GM12878 (cell line): ENCODE measurements at regions of chr3 and their contacts with region 1.

Region 1: GRCh38 chr3:99607151-99607550 is 31.2 kb upstream of the COL8A1 start:
- DNase-seq: no peak
- ATAC-seq: peak; percentile 40; the same call in 2 of the 3 replicates
- H3K4me3 ChIP-seq: no peak overlapping the region
- H3K27ac ChIP-seq: no peak overlapping the region
- H3K4me1 ChIP-seq: no peaks in the 10 kb centered on the region
- H3K27me3 ChIP-seq: no peaks in the 10 kb centered on the region
- CTCF ChIP-seq: no peak
- EP300 ChIP-seq: no peak
- POLR2A ChIP-seq: no peak
- RAD21 ChIP-seq: no peak

Region 2: GRCh38 chr3:99551520-99551919 is 55.6 kb before region 1 on chr3:
- CTCF ChIA-PET with region 1: no interaction called
- POLR2A ChIA-PET with region 1: no interaction called
- RAD21 ChIA-PET with region 1: no interaction called
- SMC1A ChIA-PET with region 1: no interaction called
- in situ Hi-C with region 1: no loop called
- intact Hi-C with region 1: loop called (anchors 10 kb)
- DNase-seq: no peak
- ATAC-seq: no peak
- H3K4me3 ChIP-seq: no peak overlapping the region
- H3K27ac ChIP-seq: no peak overlapping the region
- H3K4me1 ChIP-seq: no peaks in the 10 kb centered on the region
- H3K27me3 ChIP-seq: no peaks in the 10 kb centered on the region
- CTCF ChIP-seq: no peak
- EP300 ChIP-seq: no peak
- POLR2A ChIP-seq: no peak
- RAD21 ChIP-seq: no peak